AG04450 (cell line): ENCODE measurements at regions of chr12 and their contacts with region 1.

Region 1: DNA sequence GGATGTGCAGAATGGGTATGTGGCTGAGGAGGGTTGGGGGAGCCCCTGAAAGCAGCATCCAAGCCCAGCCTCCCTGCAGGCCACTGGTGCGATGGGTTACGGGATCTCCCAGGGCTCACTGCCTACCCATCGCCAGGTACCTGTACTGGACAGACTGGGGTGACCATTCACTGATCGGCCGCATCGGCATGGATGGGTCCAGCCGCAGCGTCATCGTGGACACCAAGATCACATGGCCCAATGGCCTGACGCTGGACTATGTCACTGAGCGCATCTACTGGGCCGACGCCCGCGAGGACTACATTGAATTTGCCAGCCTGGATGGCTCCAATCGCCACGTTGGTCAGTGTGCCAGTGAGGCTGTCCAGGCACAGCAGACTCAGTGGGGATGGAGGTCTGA is 18.3 kb upstream of the NXPH4 start:
- DNase-seq: no peak
- H3K4me3 ChIP-seq: no peak overlapping the region
- H3K27ac ChIP-seq: no peak overlapping the region
- H3K27me3 ChIP-seq: no peaks in the 10 kb centered on the region
- CTCF ChIP-seq: no peak

Region 2: GRCh38 chr12:57151741-57152630 is 46.3 kb before region 1 on chr12:
- CTCF ChIA-PET with region 1: no interaction called
- POLR2A ChIA-PET with region 1: no interaction called
- DNase-seq: peak; percentile 56
- H3K4me3 ChIP-seq: no peak overlapping the region
- H3K27ac ChIP-seq: peak overlapping the region; percentile 89
- H3K27me3 ChIP-seq: no peaks in the 10 kb centered on the region
- CTCF ChIP-seq: no peak

Region 3: DNA sequence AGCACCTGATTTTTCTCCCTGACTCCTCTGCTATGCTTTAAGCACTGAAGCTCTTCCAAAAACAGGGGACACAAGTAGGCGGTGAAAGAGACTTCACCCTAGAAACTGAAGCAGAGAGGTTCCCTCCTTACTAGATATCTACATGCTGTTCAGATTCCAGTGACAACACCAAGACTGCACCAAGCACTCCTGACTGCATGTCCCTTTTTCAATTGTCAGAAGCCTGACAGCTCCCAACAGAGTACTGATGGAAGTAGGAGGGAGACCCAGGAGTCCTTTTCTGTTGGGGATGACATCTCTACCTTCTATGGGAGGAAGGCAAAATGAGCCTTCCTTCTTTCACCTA is 338.2 kb after region 1 on chr12:
- CTCF ChIA-PET with region 1: no interaction called
- POLR2A ChIA-PET with region 1: interaction called, 14 read pairs
- DNase-seq: no peak
- H3K4me3 ChIP-seq: no peak overlapping the region
- H3K27ac ChIP-seq: no peak overlapping the region
- H3K27me3 ChIP-seq: no peaks in the 10 kb centered on the region
- CTCF ChIP-seq: no peak